Endothelial cell of umbilical vein (primary cell): ENCODE measurements at regions of chr6 and their contacts with region 1.

Region 1: GRCh38 chr6:32984605-32985389 is 16.4 kb downstream of the BRD2 start:
- DNase-seq: peak; percentile 87
- H3K4me3 ChIP-seq: no peak overlapping the region
- H3K27ac ChIP-seq: no peak overlapping the region
- H3K4me1 ChIP-seq: no peaks in the 10 kb centered on the region
- H3K27me3 ChIP-seq: peaks cover 0 to 17% of the 10 kb centered on the region in 2 experiments
- CTCF ChIP-seq: peak; percentile 81 to 86
- POLR2A ChIP-seq: peak; percentile 26

Region 2: DNA sequence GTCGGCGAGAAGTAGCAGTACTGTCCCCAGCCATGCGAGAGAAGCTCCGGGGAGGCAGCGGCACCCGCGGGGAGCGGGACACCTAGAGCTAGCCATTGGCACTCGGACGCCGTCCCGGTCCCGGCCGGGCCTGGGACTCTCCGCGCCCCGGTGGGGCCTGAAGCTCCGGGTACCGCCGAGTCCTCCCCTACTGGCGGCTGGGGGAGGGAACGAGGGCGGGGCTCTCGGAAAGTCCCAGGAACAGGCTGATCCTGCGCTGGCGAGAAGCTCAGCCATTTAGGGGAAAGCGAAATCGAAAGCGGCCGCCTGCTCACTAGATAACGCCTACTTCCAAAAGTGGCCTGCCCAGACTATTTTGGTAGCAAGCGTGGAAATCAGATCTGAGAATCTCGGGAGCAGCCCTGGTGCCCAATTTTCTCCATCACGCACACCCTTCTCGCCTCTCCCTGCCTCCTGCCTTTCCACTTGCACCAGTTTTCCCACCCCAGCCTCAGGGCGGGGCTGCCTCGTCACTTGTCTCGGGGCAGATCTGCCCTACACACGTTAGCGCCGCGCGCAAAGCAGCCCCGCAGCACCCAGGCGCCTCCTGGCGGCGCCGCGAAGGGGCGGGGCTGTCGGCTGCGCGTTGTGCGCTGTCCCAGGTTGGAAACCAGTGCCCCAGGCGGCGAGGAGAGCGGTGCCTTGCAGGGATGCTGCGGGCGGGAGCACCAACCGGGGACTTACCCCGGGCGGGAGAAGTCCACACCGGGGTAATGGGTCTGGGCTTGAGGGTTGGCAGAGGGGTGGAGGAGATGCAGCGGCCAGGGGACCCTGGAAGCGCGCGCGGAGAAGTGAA is 131.0 kb before region 1 on chr6 and contains the starts of genes PSMB9 and TAP1:
- CTCF ChIA-PET with region 1: interaction called, 16 read pairs
- POLR2A ChIA-PET with region 1: no interaction called
- dilution Hi-C with region 1: no loop called
- intact Hi-C with region 1: no loop called
- DNase-seq: peak; percentile 96
- H3K4me3 ChIP-seq: peak within 1 kb of the TSS; percentile 63 to 83 (median 75)
- H3K27ac ChIP-seq: peak within 1 kb of the TSS; percentile 18
- H3K4me1 ChIP-seq: peaks cover 13% of the 10 kb centered on the region
- H3K27me3 ChIP-seq: peaks cover 2 to 15% of the 10 kb centered on the region in 2 experiments
- CTCF ChIP-seq: peak; percentile 82 to 86
- POLR2A ChIP-seq: peak; percentile 64
- total RNA-seq, gene PSMB9: 2.7 and 6.3 TPM in 2 replicates
- total RNA-seq, gene TAP1: 18.8 and 25.9 TPM in 2 replicates

Region 3: DNA sequence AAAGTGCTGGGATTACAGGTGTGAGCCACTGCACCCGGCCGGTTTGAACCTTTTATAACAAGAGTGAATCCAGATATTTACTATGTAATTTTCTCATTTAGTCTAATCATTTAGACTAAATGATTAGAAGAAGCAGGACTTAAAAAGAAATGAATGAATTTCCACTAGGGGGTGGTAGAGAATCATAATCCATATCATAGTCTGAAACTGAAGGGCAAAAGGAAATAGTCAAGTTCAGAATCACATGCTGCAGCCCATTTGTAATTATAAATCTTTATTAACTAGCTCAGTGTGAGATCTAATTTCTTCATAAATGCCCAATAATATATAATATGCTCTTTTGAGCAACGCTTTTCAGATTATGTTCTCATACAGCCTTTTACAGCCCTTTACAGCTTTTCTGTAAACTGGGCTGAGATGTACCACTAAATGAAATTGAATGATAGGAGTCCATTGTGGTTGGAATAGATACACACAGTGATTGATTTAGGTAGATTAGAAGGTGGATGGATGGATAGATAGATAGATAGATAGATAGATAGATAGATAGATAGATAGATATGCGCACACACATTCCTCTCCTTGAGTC is 99.0 kb before region 1 on chr6:
- CTCF ChIA-PET with region 1: interaction called, 192 read pairs
- POLR2A ChIA-PET with region 1: interaction called, 3 read pairs
- dilution Hi-C with region 1: no loop called
- intact Hi-C with region 1: loop called (anchors 1 kb)
- DNase-seq: peak; percentile 72
- H3K4me3 ChIP-seq: no peak overlapping the region
- H3K27ac ChIP-seq: no peak overlapping the region
- H3K4me1 ChIP-seq: peaks cover under 1% of the 10 kb centered on the region
- H3K27me3 ChIP-seq: peaks cover 28 to 30% of the 10 kb centered on the region in 2 experiments
- CTCF ChIP-seq: peak; percentile 34
- POLR2A ChIP-seq: no peak

Region 4: GRCh38 chr6:32912951-32913350 is 71.8 kb before region 1 on chr6:
- CTCF ChIA-PET with region 1: interaction called, 13 read pairs
- POLR2A ChIA-PET with region 1: no interaction called
- dilution Hi-C with region 1: no loop called
- intact Hi-C with region 1: no loop called
- DNase-seq: no peak
- H3K4me3 ChIP-seq: no peak overlapping the region
- H3K27ac ChIP-seq: no peak overlapping the region
- H3K4me1 ChIP-seq: no peaks in the 10 kb centered on the region
- H3K27me3 ChIP-seq: peaks cover 8 to 11% of the 10 kb centered on the region in 2 experiments
- CTCF ChIP-seq: no peak
- POLR2A ChIP-seq: no peak

Region 5: DNA sequence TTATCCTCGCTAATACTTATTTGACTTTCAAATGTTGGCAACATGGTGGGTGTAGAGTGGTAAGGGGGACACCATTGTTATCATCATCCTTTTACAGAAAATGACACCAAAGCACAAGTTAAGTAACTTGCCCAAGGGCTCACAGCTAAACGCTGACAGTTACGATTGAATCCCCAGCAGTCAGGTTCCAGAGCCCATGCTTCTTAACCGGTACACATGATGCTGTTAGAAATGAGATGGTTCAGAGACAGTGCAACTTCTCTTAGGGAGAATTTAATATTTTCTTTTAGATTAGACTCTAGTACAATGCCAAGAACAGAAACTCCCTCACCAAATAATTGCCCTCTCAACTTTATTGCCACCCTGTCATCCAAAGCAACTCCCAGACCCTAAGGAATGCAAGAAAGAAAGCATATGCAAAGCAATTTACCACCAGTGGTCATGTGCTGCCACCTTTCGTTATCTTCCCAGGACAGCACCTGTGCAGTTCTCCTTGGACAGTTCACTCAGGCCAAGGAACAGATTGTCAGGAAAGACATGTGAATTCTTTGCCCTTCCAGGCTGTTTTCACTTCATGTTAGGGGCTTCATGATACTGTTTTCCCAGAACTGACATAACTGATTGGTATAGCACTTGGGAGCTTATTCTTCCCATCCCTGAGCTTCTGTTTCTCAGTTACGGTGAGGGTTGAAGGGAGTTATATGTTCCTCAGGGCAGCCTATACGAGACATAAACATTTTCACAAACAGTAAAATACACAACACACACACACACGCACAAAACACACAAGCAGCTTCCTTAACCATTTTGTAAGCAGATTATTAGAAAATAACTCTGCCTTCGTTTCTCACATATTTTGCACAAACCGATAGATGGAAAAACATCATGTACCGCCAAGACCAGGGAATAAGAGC is 37.0 kb before region 1 on chr6:
- CTCF ChIA-PET with region 1: interaction called, 64 read pairs
- POLR2A ChIA-PET with region 1: no interaction called
- dilution Hi-C with region 1: no loop called
- intact Hi-C with region 1: loop called (anchors 1 kb)
- DNase-seq: peak; percentile 58
- H3K4me3 ChIP-seq: no peak overlapping the region
- H3K27ac ChIP-seq: no peak overlapping the region
- H3K4me1 ChIP-seq: no peaks in the 10 kb centered on the region
- H3K27me3 ChIP-seq: peaks cover 5 to 28% of the 10 kb centered on the region in 2 experiments
- CTCF ChIP-seq: peak; percentile 34 to 39
- POLR2A ChIP-seq: no peak

Region 6: DNA sequence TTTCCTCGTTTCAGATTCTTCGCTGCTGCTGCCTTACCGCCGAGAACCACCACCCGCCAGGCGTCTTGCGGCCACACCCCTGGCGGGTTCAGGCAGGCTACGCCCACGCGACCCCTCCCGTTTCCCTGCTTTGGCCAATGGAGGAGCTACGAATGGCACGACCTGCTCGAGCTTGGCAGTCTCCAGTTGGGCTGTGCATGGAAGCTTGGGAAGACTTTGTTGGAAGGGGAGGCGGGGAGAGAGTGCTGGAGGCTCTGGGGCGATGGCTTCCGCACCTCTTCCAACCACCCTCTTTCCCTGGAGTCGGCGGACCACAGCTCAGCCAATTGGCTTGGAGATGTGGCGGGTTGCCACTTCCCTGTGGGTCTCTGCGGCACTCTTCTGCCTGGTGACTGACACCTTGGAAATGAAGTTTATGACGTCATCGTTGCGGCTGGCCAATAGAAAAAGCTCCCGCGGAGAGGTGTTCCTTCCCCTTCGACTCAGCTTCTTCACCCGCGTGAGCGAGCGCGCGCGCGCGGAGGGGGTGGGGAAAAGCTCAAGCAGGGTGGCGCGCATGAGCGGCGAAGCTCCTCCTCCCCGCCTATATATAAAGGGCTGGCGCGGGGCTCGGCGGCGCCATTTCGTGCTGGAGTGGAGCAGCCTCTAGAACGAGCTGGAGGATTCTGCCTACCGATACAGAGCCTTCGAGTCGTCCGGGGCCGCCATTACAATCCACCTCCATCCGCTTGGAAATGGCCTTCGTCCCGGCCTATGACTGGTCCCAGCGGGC is 13.0 kb before region 1 on chr6:
- CTCF ChIA-PET with region 1: interaction called, 181 read pairs
- POLR2A ChIA-PET with region 1: interaction called, 89 read pairs
- dilution Hi-C with region 1: no loop called
- intact Hi-C with region 1: loop called (anchors 1 kb)
- DNase-seq: peak; percentile 100
- H3K4me3 ChIP-seq: peak overlapping the region; percentile 83 to 96 (median 91)
- H3K27ac ChIP-seq: peak overlapping the region; percentile 99
- H3K4me1 ChIP-seq: peaks cover 29% of the 10 kb centered on the region
- H3K27me3 ChIP-seq: no peaks in the 10 kb centered on the region
- CTCF ChIP-seq: no peak
- POLR2A ChIP-seq: peak; percentile 100

Region 7: DNA sequence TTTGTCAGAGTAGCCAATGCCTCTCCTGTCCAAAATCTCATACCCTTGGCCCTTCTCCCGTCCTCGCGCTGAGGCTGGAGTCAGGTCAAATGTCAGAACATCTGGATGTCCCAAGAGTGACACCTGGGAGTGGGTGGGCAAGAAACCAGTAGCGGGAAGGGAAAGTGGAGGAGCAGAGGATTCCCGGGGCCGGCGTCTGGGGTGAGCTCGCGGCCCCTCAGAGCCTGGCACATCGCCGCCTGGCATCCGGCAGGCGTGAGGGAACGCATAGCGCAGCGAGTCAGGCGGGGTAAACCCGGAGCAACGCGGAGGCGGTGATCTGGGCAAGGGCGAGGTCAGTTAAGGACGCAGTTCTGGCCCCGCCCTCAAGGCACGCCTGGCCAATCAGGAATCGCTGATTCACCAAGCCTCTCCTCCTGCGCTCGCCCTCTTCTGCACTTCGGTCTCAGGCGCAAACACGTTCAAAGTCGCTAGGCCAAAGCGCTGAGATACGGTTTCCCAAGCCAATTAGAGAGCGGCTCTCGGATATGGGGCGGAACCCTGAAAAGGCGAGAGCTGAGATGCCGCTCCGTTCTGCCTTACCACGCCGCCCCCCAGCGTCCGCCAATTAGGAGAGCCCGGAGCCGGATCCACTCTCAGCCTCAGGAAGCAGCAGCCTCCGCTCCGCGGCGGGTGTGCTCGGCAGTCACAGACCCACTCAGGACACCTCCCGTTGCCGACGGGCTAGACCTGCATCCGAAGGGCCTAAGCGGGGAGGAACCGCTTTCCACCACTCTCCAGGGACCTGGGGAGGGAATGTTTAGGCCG is 264.3 kb after region 1 on chr6:
- CTCF ChIA-PET with region 1: interaction called, 14 read pairs
- POLR2A ChIA-PET with region 1: no interaction called
- dilution Hi-C with region 1: no loop called
- intact Hi-C with region 1: no loop called
- DNase-seq: peak; percentile 100
- H3K4me3 ChIP-seq: peak overlapping the region; percentile 18 to 69 (median 38)
- H3K27ac ChIP-seq: peak overlapping the region; percentile 72
- H3K4me1 ChIP-seq: peaks cover 23% of the 10 kb centered on the region
- H3K27me3 ChIP-seq: peaks cover 0 to 2% of the 10 kb centered on the region in 2 experiments
- CTCF ChIP-seq: peak in 1 of 2 donors; percentile 21
- POLR2A ChIP-seq: peak; percentile 93

Region 8: DNA sequence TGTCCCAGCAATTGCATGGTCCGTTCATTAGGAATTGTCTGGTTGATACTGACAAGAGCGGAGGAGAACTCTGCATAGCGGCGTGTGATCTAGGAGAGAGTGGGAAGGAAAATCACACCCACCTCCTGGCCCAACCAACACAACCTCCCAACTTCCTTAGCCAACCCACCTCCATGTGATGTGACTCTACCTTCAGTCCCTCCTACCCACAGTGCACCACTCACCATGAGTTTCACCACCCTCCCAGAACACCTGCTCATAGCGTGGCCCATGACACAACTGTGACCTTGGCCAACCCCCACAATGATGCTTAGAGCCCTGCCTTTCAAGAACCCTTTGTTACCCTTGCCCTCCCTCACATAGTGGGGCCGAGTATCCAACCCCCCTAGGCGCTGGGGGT is 279.2 kb after region 1 on chr6:
- CTCF ChIA-PET with region 1: no interaction called
- POLR2A ChIA-PET with region 1: no interaction called
- dilution Hi-C with region 1: no loop called
- intact Hi-C with region 1: no loop called
- DNase-seq: no peak
- H3K4me3 ChIP-seq: no peak overlapping the region
- H3K27ac ChIP-seq: no peak overlapping the region
- H3K4me1 ChIP-seq: no peaks in the 10 kb centered on the region
- H3K27me3 ChIP-seq: no peaks in the 10 kb centered on the region
- CTCF ChIP-seq: no peak
- POLR2A ChIP-seq: no peak